BJ (cell line): ENCODE measurements at regions of chr11 and their contacts with region 1.

Region 1: GRCh38 chr11:15199693-15200092 is 85.0 kb downstream of the INSC start:
- DNase-seq: no peak
- H3K4me3 ChIP-seq: no peak overlapping the region
- H3K27me3 ChIP-seq: peaks cover 1% of the 10 kb centered on the region; the same call in 1 of the 2 replicates
- CTCF ChIP-seq: no peak

Region 2: GRCh38 chr11:15101072-15101709 is 98.5 kb before region 1 on chr11:
- CTCF ChIA-PET with region 1: interaction called, 276 read pairs
- POLR2A ChIA-PET with region 1: no interaction called
- DNase-seq: no peak
- H3K4me3 ChIP-seq: no peak overlapping the region
- H3K27me3 ChIP-seq: no peaks in the 10 kb centered on the region; the same call in 1 of the 2 replicates
- CTCF ChIP-seq: peak; percentile 96

Region 3: GRCh38 chr11:15175831-15176230 is 23.9 kb before region 1 on chr11:
- CTCF ChIA-PET with region 1: no interaction called
- POLR2A ChIA-PET with region 1: no interaction called
- DNase-seq: no peak
- H3K4me3 ChIP-seq: no peak overlapping the region
- H3K27me3 ChIP-seq: no peaks in the 10 kb centered on the region
- CTCF ChIP-seq: no peak